Heart right ventricle (tissue), 16 donors: ENCODE measurements at regions of chr1 and their contacts with region 1.

Region 1: DNA sequence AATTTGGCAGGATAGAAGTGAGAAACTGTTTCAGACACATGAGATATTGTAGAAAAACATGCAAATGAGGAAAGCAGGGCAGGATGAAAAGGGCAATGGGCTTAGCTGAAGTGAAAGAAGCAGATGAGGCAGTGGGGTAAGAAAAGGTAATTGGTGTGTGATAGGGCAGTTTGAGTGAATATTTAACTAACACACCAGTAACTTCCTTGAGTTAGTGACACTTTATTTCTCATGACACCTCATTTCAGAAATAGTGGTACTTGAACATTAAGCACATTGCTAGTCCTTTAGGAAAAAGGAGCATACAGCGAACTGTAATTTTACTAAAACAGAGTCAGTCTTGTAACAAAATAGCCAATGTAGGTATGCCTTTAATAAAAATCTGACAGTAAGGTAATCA is 415.0 kb downstream of the DPYD start:
- DNase-seq: no peak
- ATAC-seq: no peak
- H3K4me3 ChIP-seq: no peak overlapping the region
- H3K27ac ChIP-seq: no peak overlapping the region
- H3K4me1 ChIP-seq: peaks cover 0 to 20% (median 8%) of the 10 kb centered on the region in 9 donors
- H3K27me3 ChIP-seq: no peaks in the 10 kb centered on the region
- CTCF ChIP-seq: no peak

Region 2: DNA sequence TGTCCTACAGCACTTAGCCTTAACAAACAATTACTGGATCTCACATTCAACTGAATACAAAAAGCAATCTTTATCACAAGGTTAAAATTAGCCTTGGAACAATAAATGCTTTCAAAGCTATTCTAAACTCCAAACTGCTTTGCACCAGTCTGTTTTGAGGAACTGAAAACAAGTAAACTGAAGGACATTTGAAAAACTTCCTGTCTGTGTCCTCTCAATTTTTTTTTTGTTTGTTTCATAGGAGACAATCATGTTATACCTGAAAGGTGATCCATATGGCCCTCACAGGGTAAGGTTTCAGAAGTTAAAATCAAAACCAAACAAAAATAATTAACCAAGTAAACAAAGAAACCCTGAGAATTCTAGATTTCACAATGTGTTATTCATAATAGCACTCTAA is 44.0 kb before region 1 on chr1:
- intact Hi-C with region 1: loop called in 2 of 10 experiments (anchors 5 kb)
- DNase-seq: no peak
- ATAC-seq: peak in 5 of 8 donors; percentile 44 to 78 (median 69)
- H3K4me3 ChIP-seq: no peak overlapping the region
- H3K27ac ChIP-seq: peak overlapping the region in 8 of 10 donors; percentile 8 to 42 (median 36)
- H3K4me1 ChIP-seq: peaks cover 0 to 24% (median 11%) of the 10 kb centered on the region in 9 donors
- H3K27me3 ChIP-seq: no peaks in the 10 kb centered on the region
- CTCF ChIP-seq: no peak

Region 3: DNA sequence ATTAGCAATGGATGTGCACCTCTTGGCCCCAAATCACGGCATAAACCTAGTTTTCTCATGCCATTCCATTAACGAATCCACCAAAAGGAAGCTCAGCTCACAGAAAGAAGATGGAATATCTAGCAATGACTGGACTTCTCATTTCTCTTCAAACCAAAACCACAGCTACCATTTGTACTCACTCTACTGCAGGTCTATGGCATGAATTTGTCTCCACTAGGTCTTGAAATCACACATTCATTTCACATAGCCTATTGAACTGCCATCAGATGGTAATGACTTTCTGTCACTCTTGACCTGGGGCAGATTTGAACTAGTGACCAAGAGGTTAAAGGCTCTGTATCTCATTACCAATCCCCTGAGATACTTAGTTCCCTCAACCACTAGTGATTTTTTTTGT is 32.3 kb after region 1 on chr1:
- intact Hi-C with region 1: no loop called
- DNase-seq: no peak
- ATAC-seq: no peak
- H3K4me3 ChIP-seq: no peak overlapping the region
- H3K27ac ChIP-seq: no peak overlapping the region
- H3K4me1 ChIP-seq: no peaks in the 10 kb centered on the region
- H3K27me3 ChIP-seq: no peaks in the 10 kb centered on the region
- CTCF ChIP-seq: no peak

Region 4: GRCh38 chr1:97573560-97573959 is 67.7 kb after region 1 on chr1:
- intact Hi-C with region 1: no loop called
- DNase-seq: no peak
- ATAC-seq: no peak
- H3K4me3 ChIP-seq: no peak overlapping the region
- H3K27ac ChIP-seq: no peak overlapping the region
- H3K4me1 ChIP-seq: no peaks in the 10 kb centered on the region
- H3K27me3 ChIP-seq: no peaks in the 10 kb centered on the region
- CTCF ChIP-seq: no peak